ENCODE measurements at regions of chr9 and their contacts with region 1.

Region 1: GRCh38 chr9:32968101-32969011 is 33.1 kb downstream of the APTX start:
- DNase-seq: peak in 1 of 2 experiments; percentile 24
- H3K4me3 ChIP-seq: no peak overlapping the region
- H3K27ac ChIP-seq: no peak overlapping the region
- H3K4me1 ChIP-seq: no peaks in the 10 kb centered on the region
- H3K27me3 ChIP-seq: no peaks in the 10 kb centered on the region
- CTCF ChIP-seq: peak; percentile 81

Region 2: DNA sequence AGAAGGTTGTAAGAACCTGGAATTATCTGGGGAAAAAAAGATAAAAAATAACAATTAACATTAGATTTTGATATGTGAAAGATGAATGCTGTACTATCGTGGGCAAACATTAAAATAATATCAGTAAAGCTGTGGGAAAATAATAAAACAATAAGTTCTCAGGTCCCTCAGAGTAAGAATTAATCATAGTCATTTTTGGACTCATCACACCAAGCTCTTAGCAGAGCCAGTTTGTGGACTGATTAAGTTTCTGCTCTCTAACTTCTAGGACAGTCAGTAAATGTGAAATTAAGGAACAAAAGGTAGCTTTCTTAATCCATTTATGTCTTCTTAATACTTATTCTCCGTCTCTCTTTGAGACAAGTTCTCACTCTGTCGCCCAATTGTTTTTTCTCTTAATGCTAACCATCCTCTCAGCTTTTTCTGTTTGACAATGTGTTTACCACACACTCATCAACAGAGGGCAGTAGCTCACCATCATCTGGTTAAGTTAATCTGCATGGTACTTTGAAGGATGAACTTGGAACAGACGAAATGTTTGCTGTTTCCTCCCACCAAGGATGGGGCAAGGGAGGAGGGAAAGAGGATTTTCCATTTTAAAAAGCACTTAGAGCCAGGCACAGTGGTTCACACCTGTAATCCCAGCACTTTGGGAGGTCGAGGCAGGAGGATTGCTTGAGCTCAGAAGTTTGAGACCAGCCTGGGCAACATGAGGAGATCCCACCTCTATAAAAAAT is 589.2 kb before region 1 on chr9:
- CTCF ChIA-PET with region 1: interaction called, 7 read pairs
- POLR2A ChIA-PET with region 1: no interaction called
- intact Hi-C with region 1: loop called (anchors 2 kb)
- DNase-seq: peak; percentile 35 to 41
- H3K4me3 ChIP-seq: no peak overlapping the region
- H3K27ac ChIP-seq: no peak overlapping the region
- H3K4me1 ChIP-seq: no peaks in the 10 kb centered on the region
- H3K27me3 ChIP-seq: no peaks in the 10 kb centered on the region
- CTCF ChIP-seq: peak; percentile 74

Region 3: GRCh38 chr9:32579706-32580331 is 388.5 kb before region 1 on chr9:
- CTCF ChIA-PET with region 1: interaction called, 8 read pairs
- POLR2A ChIA-PET with region 1: no interaction called
- intact Hi-C with region 1: loop called (anchors 1 kb)
- DNase-seq: peak; percentile 36 to 41
- H3K4me3 ChIP-seq: no peak overlapping the region
- H3K27ac ChIP-seq: no peak overlapping the region
- H3K4me1 ChIP-seq: no peaks in the 10 kb centered on the region
- H3K27me3 ChIP-seq: no peaks in the 10 kb centered on the region
- CTCF ChIP-seq: peak; percentile 88

Region 4: DNA sequence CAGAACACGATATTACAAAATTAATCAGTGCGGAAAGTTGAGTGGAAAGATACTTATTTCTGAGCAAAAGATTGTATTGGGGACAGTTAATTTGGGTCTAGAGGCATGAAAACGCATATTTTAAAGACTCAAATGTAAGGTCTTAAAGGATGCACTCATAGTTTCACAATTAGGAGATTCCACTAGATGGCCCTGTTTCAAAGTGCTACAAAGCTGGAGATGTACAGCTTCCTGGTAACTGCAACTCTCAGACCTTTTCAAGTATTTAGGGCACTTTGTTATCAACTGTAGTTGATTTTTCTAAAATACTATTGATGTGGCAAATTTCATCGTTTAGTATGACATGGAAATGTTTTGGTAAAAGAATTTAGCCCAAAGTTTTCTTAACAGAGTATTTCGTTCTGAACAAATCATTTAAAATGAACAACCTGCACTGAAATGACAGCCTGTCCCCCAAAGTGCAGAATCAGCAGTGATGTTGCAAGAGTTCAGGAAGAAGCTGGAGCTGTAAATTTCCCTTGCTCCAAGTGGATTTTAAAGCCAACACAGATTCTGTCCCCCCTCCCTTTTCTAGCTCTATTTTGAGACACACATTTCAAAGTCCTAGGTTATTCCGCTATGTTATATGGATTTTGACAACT is 379.2 kb before region 1 on chr9:
- CTCF ChIA-PET with region 1: interaction called, 4 read pairs
- POLR2A ChIA-PET with region 1: no interaction called
- intact Hi-C with region 1: loop called (anchors 2 kb)
- DNase-seq: peak; percentile 3 to 55
- H3K4me3 ChIP-seq: no peak overlapping the region
- H3K27ac ChIP-seq: no peak overlapping the region
- H3K4me1 ChIP-seq: peaks cover 20% of the 10 kb centered on the region
- H3K27me3 ChIP-seq: no peaks in the 10 kb centered on the region
- CTCF ChIP-seq: peak; percentile 65

Region 5: GRCh38 chr9:32741706-32742105 is 226.7 kb before region 1 on chr9:
- CTCF ChIA-PET with region 1: no interaction called
- POLR2A ChIA-PET with region 1: no interaction called
- intact Hi-C with region 1: loop called (anchors 5 kb)
- DNase-seq: peak; percentile 42 to 82
- H3K4me3 ChIP-seq: no peak overlapping the region; the same call in 1 of the 2 replicates
- H3K27ac ChIP-seq: peak overlapping the region; percentile 86
- H3K4me1 ChIP-seq: peaks cover 61% of the 10 kb centered on the region
- H3K27me3 ChIP-seq: no peaks in the 10 kb centered on the region
- CTCF ChIP-seq: no peak

Region 6: DNA sequence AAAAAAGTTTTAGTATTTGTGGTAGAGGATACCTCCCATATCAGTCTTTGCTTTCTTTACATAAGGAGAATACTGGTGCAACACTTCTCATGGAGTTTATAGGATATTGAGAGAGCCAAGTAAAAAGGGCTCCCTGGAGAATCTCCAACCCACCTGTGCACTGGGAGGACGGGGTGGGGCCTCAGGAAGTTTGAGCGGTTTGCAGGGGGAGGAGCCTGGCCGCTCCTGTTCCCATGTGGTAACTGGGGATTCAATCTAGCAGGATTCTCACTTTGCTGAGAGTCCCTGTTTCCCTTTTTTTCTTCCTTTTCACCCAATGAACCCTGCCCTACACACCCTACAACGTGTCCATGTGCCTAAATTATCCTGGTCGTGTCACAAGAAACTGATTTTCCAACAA is 49.7 kb before region 1 on chr9:
- CTCF ChIA-PET with region 1: no interaction called
- POLR2A ChIA-PET with region 1: no interaction called
- intact Hi-C with region 1: no loop called
- DNase-seq: no peak
- H3K4me3 ChIP-seq: no peak overlapping the region
- H3K27ac ChIP-seq: no peak overlapping the region
- H3K4me1 ChIP-seq: no peaks in the 10 kb centered on the region
- H3K27me3 ChIP-seq: no peaks in the 10 kb centered on the region
- CTCF ChIP-seq: no peak

Region 7: GRCh38 chr9:33076026-33076357 is 107.6 kb after region 1 on chr9:
- CTCF ChIA-PET with region 1: no interaction called
- POLR2A ChIA-PET with region 1: no interaction called
- intact Hi-C with region 1: no loop called
- DNase-seq: no peak
- H3K4me3 ChIP-seq: peak overlapping the region; percentile 86
- H3K27ac ChIP-seq: peak overlapping the region; percentile 70
- H3K4me1 ChIP-seq: peaks cover 8% of the 10 kb centered on the region
- H3K27me3 ChIP-seq: no peaks in the 10 kb centered on the region
- CTCF ChIP-seq: no peak

Measured in PC-9 (cell line).